ENCODE measurements at regions of chr1 and their contacts with region 1.

Region 1: DNA sequence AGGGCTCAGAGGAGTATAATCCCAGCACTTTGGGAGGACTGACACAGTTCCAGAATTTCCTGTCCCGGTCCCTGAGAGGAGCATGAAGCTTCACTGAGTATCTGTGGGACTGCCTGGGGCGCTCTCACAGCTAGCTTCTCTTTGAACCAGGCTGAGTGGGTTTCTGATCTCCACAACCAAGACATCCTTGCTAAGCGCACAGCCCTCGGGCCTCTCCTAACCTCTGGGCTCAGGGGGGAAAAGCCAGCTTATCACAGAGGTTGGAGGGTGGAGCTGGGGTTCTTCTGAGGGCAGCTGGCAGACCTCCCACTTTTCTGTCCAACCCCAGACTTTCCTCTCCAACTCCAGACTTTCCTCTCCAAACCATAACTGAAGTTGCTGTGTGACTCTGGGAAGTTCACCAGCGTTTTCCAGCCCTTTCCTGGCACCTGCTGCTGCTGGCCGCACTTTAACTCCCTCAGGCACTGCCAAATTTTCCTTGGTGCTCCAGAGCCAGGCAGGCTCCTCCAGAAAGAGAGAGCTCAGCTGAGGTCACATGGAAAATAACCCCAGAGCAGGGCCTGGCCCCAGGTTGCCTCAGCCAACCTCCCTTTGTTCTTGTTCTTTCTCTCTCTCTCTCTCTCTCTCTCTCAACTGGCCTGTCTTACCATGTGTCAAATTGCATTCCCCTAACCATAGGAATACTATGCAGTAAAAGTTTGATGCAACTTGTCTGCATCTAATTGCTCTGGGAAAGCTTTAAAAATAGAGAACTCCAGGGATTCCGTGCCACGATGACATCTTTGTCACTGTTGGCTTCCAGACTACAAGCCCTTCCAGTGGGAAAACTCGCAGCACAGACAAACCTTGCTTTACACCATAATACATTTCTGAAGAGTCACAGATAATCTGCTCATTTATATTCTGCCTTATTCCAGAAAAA is 49.5 kb downstream of the OLFML2B start:
- DNase-seq: peak in 1 of 2 donors; percentile 77
- ATAC-seq: peak; percentile 64
- H3K4me3 ChIP-seq: no peak overlapping the region
- H3K27ac ChIP-seq: peak overlapping the region in 1 of 2 donors; percentile 76
- H3K4me1 ChIP-seq: peaks cover 4% of the 10 kb centered on the region in 2 donors
- H3K27me3 ChIP-seq: no peaks in the 10 kb centered on the region

Region 2: GRCh38 chr1:161330346-161330745 is 643.8 kb before region 1 on chr1:
- intact Hi-C with region 1: no loop called
- DNase-seq: no peak
- ATAC-seq: no peak
- H3K4me3 ChIP-seq: no peak overlapping the region
- H3K27ac ChIP-seq: no peak overlapping the region
- H3K4me1 ChIP-seq: no peaks in the 10 kb centered on the region
- H3K27me3 ChIP-seq: no peaks in the 10 kb centered on the region

Region 3: DNA sequence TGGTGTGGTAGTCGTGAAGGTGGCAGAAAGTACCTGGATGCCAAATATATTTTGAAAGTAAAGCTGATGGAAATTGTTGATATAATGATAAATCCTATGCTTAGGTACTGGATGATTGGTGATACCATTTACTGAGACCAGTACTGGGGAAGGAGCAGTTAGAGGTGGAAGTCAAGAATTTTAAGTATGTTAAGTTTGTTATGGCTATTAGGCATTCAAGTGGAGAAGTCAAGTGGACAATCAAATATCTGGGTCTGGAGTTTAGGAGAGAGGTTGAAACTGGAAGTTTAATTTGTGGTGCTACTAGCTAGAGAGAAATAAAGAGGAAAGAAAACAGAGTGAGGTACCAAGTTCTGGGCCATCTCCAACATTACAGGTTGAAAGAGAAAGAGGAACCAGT is 118.9 kb before region 1 on chr1:
- intact Hi-C with region 1: no loop called
- DNase-seq: no peak
- ATAC-seq: no peak
- H3K4me3 ChIP-seq: no peak overlapping the region
- H3K27ac ChIP-seq: no peak overlapping the region
- H3K4me1 ChIP-seq: no peaks in the 10 kb centered on the region
- H3K27me3 ChIP-seq: no peaks in the 10 kb centered on the region

Region 4: GRCh38 chr1:162011337-162012012 is 37.3 kb after region 1 on chr1:
- intact Hi-C with region 1: loop called (anchors 5 kb)
- DNase-seq: no peak
- ATAC-seq: peak; percentile 16
- H3K4me3 ChIP-seq: no peak overlapping the region
- H3K27ac ChIP-seq: peak overlapping the region in 1 of 2 donors; percentile 60
- H3K4me1 ChIP-seq: no peaks in the 10 kb centered on the region
- H3K27me3 ChIP-seq: no peaks in the 10 kb centered on the region

Region 5: DNA sequence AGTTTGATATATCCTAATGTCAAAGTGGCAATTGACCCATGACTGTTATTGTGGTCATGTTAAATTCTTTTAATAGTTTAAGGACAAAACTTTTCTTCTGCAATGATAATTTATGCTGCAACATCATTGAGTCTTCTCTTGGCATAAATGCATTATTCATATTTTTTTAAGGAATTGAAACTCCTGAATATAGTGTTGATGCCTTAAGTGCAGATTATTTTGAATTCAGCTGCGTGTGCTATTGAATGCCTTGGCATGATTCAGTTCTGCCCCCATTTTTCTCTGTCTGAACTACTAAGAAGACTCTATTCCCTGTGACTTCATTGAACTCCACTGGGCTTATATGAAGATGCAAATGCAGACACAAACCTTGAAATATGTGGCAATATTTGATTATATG is 72.7 kb after region 1 on chr1:
- intact Hi-C with region 1: no loop called
- DNase-seq: no peak
- ATAC-seq: no peak
- H3K4me3 ChIP-seq: no peak overlapping the region
- H3K27ac ChIP-seq: no peak overlapping the region
- H3K4me1 ChIP-seq: no peaks in the 10 kb centered on the region
- H3K27me3 ChIP-seq: no peaks in the 10 kb centered on the region